A549 (cell line): ENCODE measurements at regions of chr12 and their contacts with region 1.

Region 1: DNA sequence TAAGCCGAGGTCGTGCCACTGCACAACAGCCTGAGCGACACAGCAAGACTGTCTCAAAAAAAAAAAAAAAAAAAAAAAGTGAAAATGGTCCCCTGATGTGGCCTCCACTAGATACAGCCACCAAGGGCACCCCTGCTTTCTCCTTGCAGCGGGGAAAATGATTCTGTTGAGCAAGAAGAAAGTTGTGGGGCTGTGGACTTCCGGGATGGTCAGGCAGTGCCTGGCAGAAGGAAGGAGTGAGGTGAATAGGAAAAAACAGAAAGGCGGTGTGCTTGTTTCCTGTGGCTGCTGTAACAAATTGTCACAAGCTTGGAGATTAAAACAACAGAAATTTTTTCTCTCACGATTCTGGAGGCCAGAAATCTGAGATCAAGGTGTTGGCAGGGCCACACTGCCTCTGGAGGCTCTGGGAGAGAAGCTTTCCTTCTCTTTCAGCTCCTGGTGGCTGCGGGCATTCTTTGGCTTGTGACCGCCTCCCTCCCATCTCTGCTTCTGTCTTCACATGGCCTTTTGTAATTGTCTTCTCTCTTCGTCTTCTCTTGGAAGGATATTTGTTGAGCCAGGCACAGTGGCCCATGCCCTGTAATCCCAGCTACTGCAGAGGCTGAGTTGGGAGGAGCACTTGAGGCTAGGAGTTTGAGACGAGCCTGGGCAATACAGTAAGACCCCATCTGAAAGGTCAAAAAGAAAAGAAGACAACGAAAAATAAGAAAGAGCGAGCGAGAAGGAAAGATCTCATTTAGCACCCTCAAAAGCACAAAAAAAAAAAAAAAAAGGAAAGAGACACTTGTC is 116.6 kb upstream of the MED13L start:
- DNase-seq: no peak
- ATAC-seq: no peak
- H3K4me3 ChIP-seq: no peak overlapping the region
- H3K27ac ChIP-seq: peak overlapping the region; percentile 12 to 99; a peak in 4 of 6 replicates
- H3K4me1 ChIP-seq: peaks cover 30% of the 10 kb centered on the region
- CTCF ChIP-seq: no peak
- EP300 ChIP-seq: no peak
- POLR2A ChIP-seq: no peak
- RAD21 ChIP-seq: no peak

Region 2: DNA sequence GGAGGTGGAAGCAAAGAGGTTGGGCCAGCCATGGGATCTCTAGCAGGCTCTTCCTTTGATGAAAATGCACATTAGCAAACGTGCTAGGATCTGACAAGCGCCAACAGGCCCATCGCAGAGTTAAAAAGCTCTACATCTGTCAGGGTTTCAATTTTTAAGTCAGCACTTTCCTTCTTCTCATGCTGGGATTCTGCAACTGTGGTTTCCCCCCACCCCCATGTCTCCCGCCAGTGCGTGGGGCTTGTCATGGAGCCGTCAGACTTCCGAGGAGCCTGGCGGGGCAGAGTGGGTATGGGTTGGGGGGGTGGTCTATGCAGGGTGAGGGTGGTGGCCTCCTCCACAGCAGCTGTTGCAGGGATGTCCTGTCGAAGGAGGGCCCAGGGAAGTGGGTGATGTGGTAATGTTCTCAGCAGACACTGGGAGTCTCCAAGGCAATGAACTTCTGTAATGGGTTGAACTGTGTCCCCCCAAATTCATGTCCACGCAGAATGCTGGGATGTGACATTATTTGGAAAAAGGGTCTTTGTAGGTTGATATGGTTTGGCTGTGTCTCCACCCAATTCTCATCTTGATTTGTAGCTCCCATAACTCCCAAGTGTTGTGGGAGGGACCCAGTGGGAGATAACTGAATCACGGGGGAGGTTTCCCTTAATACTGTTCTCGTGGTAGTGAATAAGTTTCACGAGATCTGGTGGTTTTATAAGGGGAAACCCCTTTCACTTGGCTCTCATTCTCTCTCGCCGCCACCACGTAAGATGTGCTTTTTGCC is 50.0 kb after region 1 on chr12:
- CTCF ChIA-PET with region 1: no interaction called
- POLR2A ChIA-PET with region 1: no interaction called
- DNase-seq: no peak
- ATAC-seq: no peak
- H3K4me3 ChIP-seq: no peak overlapping the region
- H3K27ac ChIP-seq: peak overlapping the region in 1 of 2 experiments; percentile 12; a peak in 1 of 6 replicates
- H3K4me1 ChIP-seq: 0 out of 3 replicates have a peak, but pooled peaks cover 3% of the 10 kb centered on the region
- CTCF ChIP-seq: no peak
- EP300 ChIP-seq: no peak
- POLR2A ChIP-seq: no peak
- RAD21 ChIP-seq: no peak

Region 3: DNA sequence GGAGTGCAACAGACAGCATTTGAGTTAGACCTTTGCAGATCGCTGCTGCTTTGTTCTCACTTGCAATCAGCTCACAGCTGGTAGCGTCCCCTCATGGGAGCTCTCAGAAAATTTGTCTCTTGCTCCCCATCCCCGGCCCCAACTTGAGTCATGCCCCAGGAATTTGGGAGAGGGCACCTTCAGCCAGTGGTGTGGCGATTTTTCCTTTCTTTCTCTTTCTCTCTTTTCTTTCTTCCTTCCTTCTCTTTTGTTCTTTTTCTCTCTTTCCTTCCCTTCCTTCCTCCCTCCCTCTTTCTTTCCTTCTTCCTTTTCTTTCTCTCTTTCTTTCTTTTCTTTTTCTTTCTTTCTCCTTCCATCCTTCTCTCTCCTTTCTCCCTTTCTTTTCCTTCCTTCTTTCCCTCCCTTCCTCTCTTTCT is 130.9 kb after region 1 on chr12:
- CTCF ChIA-PET with region 1: interaction called, 3 read pairs
- POLR2A ChIA-PET with region 1: interaction called, 11 read pairs
- DNase-seq: peak in 1 of 2 experiments; percentile 77
- ATAC-seq: peak; percentile 57 to 63; a peak in 5 of 6 replicates
- H3K4me3 ChIP-seq: peak overlapping the region; percentile 26; the same call in 2 of the 3 replicates
- H3K27ac ChIP-seq: peak overlapping the region; percentile 87 to 94
- H3K4me1 ChIP-seq: peaks cover 60% of the 10 kb centered on the region
- CTCF ChIP-seq: 0 out of 3 replicates have a peak, but pooled peaks have one; percentile 21
- EP300 ChIP-seq: no peak
- POLR2A ChIP-seq: no peak
- RAD21 ChIP-seq: peak; percentile 40 to 54; a peak in 4 of 5 replicates